ENCODE measurements at regions of chr22 and their contacts with region 1.

Region 1: GRCh38 chr22:50306753-50307749 is at the start of gene PLXNB2:
- DNase-seq: peak; percentile 65
- H3K4me3 ChIP-seq: peak within 1 kb of the TSS; percentile 71 to 79 (median 75)
- H3K27ac ChIP-seq: peak within 1 kb of the TSS; percentile 53
- H3K4me1 ChIP-seq: peaks cover 37% of the 10 kb centered on the region
- H3K27me3 ChIP-seq: no peaks in the 10 kb centered on the region
- CTCF ChIP-seq: no peak
- total RNA-seq, gene PLXNB2: 122 to 240 TPM

Region 2: DNA sequence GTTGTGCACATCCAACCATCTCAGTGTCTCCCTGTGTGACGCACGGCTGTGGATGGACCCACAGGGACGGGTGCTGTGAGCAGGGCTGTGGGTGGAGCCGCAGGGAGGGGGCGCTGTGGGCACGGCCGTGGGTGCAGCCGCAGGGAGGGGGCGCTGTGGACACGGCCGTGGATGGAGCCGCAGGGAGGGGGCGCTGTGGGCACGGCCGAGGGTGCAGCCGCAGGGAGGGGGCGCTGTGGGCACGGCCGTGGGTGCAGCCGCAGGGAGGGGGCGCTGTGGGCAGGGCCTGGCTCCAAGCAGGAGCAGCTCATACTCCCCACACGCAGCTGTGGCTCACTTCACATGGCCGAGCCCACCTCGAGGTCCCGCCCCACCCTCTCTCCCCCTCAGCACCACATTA is 30.9 kb before region 1 on chr22:
- CTCF ChIA-PET with region 1: interaction called, 3 read pairs
- dilution Hi-C with region 1: no loop called
- in situ Hi-C with region 1: no loop called
- intact Hi-C with region 1: loop called (anchors 5 kb)
- DNase-seq: no peak
- H3K4me3 ChIP-seq: no peak overlapping the region
- H3K27ac ChIP-seq: no peak overlapping the region
- H3K4me1 ChIP-seq: peaks cover 7% of the 10 kb centered on the region
- H3K27me3 ChIP-seq: no peaks in the 10 kb centered on the region
- CTCF ChIP-seq: peak; percentile 40 to 66

Region 3: DNA sequence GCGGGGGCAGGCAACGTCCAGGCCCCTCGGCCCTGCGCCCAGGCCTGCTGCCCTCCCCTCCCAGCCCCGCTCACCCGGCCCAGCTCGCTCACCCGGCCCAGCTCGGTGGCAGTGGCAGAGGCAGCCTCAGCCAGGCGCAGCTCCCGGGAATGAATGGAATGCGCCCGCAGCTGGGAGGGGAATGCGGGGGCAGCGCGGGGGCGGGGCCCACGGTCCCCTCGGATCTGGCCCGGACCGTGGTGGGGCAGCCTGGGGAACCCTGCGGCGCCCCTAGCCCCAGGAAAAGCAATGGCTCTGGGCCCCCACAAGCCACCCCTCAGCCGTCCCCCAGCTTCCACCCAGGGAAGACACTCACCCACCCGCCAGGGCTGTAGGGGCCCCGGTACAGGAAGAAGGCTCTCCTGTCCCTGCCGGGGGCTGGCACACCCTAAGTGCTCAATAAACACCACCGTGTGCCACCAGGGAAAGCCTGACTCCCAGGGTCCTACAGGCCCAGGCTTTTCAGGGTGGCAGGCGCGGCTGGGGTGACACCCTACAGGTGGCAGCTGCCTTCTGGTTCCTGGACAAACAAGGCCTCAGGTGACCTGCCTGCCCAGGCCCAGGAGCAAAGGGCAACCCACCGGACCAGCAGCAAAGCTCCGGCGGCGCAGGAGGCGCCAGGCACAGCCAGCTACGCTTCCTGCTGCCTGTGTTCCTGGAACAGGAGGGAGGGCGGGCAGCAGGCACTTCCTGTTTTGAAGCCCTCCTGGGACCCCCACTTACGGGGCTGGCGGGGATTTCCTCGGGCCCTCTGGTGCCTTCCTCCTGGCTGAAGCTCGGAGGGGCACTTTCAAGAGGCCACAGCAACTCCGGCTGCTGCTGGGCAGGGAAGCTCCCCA is 13.4 kb before region 1 on chr22:
- CTCF ChIA-PET with region 1: no interaction called
- dilution Hi-C with region 1: no loop called
- in situ Hi-C with region 1: no loop called
- intact Hi-C with region 1: loop called (anchors 1 kb)
- DNase-seq: peak; percentile 58
- H3K4me3 ChIP-seq: peak overlapping the region; percentile 15 to 43 (median 26)
- H3K27ac ChIP-seq: peak overlapping the region; percentile 49
- H3K4me1 ChIP-seq: peaks cover 49% of the 10 kb centered on the region
- H3K27me3 ChIP-seq: no peaks in the 10 kb centered on the region
- CTCF ChIP-seq: no peak

Region 4: DNA sequence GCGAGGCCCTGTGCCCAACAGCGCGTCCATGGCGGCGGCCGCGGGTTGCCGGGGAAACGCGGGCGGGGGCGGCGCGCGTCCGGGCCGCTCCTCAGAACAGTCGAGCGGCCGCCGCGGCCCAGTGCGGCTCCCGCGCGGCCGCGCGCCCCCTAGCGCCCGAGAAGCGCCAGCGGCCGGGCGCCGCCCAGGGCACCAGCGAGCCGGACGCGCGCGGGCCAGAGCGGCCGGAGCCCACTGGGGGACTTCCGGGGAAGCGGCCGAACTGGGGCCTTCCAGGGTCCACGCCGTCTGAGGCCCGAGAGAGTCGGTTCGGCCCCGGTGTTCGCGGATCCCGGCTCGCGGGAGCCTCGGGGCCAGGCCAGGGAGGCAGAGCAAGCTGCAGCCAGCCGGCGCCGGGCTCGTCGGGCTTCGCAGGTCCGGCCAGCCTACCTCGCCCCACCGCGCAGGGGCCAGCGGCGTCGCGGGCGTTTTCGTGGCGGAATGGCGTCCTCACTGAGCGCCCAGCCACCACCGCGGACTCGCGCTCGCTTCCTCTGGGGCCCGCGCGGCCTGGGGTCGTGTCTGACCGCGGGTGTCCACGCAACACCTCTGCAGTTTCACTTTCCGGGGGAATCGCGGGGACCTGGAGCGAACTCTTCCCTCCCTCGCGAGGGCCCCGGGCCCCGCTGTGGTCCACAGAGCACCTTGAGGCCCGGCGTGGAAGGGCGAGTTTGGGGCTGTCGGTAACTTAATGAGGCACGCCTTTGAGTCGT is 20.1 kb after region 1 on chr22 and contains the start of gene DENND6B:
- CTCF ChIA-PET with region 1: interaction called, 3 read pairs
- dilution Hi-C with region 1: no loop called
- in situ Hi-C with region 1: no loop called
- intact Hi-C with region 1: loop called (anchors 1 kb)
- DNase-seq: peak; percentile 64
- H3K4me3 ChIP-seq: peak within 1 kb of the TSS; percentile 26 to 80 (median 77)
- H3K27ac ChIP-seq: peak within 1 kb of the TSS; percentile 54
- H3K4me1 ChIP-seq: peaks cover 13% of the 10 kb centered on the region
- H3K27me3 ChIP-seq: no peaks in the 10 kb centered on the region
- CTCF ChIP-seq: peak; percentile 40 to 45
- total RNA-seq, gene DENND6B: 2.0 to 3.4 TPM